ENCODE measurements at regions of chr6 and their contacts with region 1.

Region 1: DNA sequence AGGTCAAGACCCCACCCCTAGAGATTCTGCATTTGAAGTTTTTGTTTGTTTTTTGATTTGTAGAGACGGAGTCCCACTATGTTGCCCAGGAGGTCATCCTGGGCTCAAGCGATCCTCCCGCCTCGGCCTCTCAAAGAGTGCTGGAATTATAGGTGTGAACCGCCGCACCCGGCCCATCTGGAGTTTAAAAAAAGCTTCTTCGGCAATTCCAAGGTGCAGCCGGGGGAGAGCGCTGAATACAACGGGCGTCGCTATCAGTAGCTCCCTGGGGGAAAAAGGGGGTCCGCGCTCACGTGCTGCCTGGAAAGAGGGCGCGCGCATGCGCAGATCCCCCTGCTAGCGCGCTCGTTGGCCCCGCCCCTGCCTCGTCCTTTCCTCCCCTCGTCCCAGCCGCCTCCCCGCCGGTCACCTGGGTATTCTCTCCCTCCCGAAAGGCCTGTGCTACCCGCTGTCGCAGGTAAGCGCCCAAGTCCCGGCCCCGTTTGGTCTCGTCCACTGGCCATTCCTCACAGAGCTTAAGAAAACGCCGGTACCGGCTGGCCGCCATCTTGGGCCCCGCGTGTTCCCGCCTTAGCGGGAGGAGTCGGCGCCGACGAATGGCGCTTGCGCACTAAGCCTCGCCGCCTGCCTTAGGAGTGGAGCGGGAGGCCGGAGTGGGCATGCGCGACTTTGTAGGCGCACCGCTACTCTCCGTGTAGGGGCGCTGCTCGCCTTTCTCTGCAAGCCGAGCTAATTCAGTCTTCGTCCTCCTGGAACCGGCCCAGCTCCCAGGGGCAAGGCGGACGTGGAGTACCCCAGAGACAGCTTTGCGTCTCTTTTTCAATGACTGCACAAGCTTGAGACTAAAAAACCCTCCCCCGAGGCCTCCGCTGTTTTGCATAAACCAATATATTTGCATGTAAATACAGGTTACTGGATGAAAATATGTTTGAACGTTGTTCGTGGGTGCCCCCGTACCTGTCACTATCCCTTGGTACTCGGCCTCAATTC is at the start of gene UQCC2:
- DNase-seq: peak; percentile 96
- ATAC-seq: peak; percentile 96
- H3K4me3 Mint-ChIP-seq: peak within 1 kb of the TSS; percentile 82
- H3K27ac Mint-ChIP-seq: peak within 1 kb of the TSS; percentile 94
- H3K4me1 Mint-ChIP-seq: peaks cover 33% of the 10 kb centered on the region
- H3K27me3 Mint-ChIP-seq: no peaks in the 10 kb centered on the region; the same call in 1 of the 2 replicates
- CTCF ChIP-seq: no peak
- total RNA-seq, gene UQCC2: 65.8 to 105 TPM (median 95.3 TPM) in 3 replicates

Region 2: GRCh38 chr6:33490209-33490608 is 221.2 kb before region 1 on chr6:
- CTCF ChIA-PET with region 1: no interaction called
- POLR2A ChIA-PET with region 1: no interaction called
- DNase-seq: no peak
- ATAC-seq: peak; percentile 68
- H3K4me3 Mint-ChIP-seq: no peak overlapping the region
- H3K27ac Mint-ChIP-seq: no peak overlapping the region
- H3K4me1 Mint-ChIP-seq: peaks cover 6% of the 10 kb centered on the region
- H3K27me3 Mint-ChIP-seq: peaks cover 18% of the 10 kb centered on the region
- CTCF ChIP-seq: no peak

Region 3: DNA sequence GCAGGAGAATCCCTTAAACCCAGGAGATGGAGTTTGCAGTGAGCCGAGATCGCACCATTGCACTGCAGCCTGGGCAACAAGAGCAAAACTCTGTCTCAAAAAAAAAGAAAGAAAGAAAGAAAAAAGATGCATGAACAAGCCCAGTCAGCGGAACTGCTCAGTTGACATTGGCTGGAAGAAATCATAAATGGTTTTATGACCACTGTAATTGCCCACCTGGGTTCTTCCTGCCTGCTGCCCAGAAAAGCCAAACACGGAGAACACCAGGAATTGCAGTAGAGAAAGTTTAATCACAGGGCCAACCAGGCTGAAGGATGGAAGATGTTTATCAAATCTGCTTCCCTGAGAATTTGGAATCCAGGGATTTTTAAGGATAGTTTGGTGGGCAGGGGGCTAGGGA is 154.1 kb before region 1 on chr6:
- CTCF ChIA-PET with region 1: no interaction called
- POLR2A ChIA-PET with region 1: no interaction called
- DNase-seq: no peak
- ATAC-seq: no peak
- H3K4me3 Mint-ChIP-seq: no peak overlapping the region
- H3K27ac Mint-ChIP-seq: no peak overlapping the region
- H3K4me1 Mint-ChIP-seq: no peaks in the 10 kb centered on the region
- H3K27me3 Mint-ChIP-seq: peaks cover 6% of the 10 kb centered on the region; the same call in 1 of the 2 replicates
- CTCF ChIP-seq: no peak

Region 4: GRCh38 chr6:33723371-33724085 is 12.1 kb after region 1 on chr6:
- CTCF ChIA-PET with region 1: interaction called, 25 read pairs
- POLR2A ChIA-PET with region 1: no interaction called
- DNase-seq: no peak
- ATAC-seq: no peak
- H3K4me3 Mint-ChIP-seq: no peak overlapping the region
- H3K27ac Mint-ChIP-seq: no peak overlapping the region
- H3K4me1 Mint-ChIP-seq: peaks cover 20% of the 10 kb centered on the region
- H3K27me3 Mint-ChIP-seq: peaks cover 4% of the 10 kb centered on the region; the same call in 1 of the 2 replicates
- CTCF ChIP-seq: no peak

Region 5: DNA sequence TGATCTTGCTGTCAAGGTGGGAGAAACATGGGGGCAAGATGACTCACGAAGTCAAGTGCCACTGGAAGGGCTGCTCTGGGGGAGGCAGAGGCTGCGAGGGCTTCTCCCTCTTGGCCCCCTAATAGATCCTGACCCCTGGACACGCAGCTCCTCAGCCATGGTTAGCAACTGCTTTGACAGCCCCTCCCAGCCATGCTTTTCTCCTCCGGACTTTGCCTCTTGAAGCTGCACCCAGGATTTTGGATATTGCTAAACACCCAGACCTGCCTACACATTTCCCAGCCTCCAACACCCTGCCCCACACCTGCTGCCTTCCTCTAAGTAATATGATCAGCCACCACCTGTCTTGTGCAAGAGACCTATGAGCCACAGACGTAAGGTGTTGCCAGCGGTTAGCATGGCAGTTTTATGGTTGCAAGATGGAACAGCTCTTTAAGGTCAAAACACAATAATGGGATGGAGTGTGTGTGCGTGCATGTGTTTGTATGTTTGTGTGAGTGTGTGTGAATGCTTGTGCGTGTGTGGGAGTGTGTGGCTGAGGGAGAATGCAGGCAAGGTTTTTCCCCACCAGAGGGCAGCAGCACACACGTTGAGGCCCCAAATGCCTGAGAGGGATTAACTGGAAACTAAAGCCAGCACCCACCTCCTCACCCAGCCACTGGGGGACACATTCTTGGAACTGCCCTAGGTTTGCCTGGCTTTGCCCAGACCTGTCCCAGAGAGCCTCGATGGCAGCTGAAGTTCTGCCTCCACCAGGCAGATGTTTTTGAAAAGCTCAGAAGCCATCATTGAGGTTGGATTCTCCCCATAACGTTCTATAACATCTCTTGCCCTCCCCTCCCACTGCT is 32.8 kb after region 1 on chr6:
- CTCF ChIA-PET with region 1: interaction called, 12 read pairs
- POLR2A ChIA-PET with region 1: no interaction called
- DNase-seq: peak; percentile 84
- ATAC-seq: peak; percentile 79
- H3K4me3 Mint-ChIP-seq: no peak overlapping the region
- H3K27ac Mint-ChIP-seq: no peak overlapping the region
- H3K4me1 Mint-ChIP-seq: peaks cover 48% of the 10 kb centered on the region
- H3K27me3 Mint-ChIP-seq: no peaks in the 10 kb centered on the region; the same call in 1 of the 2 replicates
- CTCF ChIP-seq: peak; percentile 79

Region 6: DNA sequence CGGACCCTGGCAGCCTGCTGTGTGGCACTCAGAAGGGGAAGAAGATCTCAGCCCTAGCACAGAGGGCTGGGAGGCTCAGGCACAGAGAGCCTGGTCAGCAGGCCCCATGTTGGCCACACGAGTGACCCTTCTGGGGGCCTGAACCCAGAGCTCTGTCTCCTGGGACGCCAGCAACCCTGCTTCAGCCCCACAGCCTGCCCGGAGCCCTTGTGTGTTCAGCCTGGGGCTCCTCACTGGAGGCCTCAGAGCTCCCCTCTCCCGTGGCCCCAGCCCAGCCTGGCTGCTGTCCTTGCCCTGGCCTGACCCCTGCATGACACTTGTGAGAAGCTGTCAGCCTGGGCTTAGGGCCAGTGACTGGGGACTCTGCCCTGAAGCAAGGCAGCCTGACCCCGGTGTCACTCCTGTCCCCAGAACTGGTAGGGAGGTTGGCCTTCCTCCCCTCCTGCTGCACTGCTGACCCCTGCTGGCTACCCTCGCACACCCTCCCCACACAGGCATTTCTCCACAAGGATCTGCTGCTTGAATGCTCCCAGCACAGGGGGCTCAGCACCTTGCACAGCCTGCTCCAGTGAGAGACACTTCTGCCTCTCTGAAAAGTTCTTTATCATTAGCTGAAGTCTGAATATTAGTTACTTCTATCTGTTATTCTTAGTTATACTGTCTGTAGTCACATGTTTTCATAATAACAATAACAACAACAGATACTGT is 50.6 kb after region 1 on chr6:
- CTCF ChIA-PET with region 1: interaction called, 20 read pairs
- POLR2A ChIA-PET with region 1: no interaction called
- DNase-seq: peak; percentile 66
- ATAC-seq: peak; percentile 77
- H3K4me3 Mint-ChIP-seq: no peak overlapping the region
- H3K27ac Mint-ChIP-seq: no peak overlapping the region
- H3K4me1 Mint-ChIP-seq: peaks cover 7% of the 10 kb centered on the region; the same call in 1 of the 2 replicates
- H3K27me3 Mint-ChIP-seq: no peaks in the 10 kb centered on the region; the same call in 1 of the 2 replicates
- CTCF ChIP-seq: no peak

Measured in WTC11 (cell line).